MCF 10A (cell line): ENCODE measurements at regions of chr15 and their contacts with region 1.

Region 1: GRCh38 chr15:48084759-48085590 is 35.8 kb upstream of the SLC24A5 start:
- DNase-seq: peak; percentile 49
- H3K4me3 Mint-ChIP-seq: no peak overlapping the region
- H3K27ac Mint-ChIP-seq: no peak overlapping the region
- H3K4me1 Mint-ChIP-seq: peaks cover 12% of the 10 kb centered on the region
- H3K27me3 Mint-ChIP-seq: no peaks in the 10 kb centered on the region
- CTCF ChIP-seq: peak; percentile 47

Region 2: GRCh38 chr15:47473832-47474231 is 611.1 kb before region 1 on chr15:
- CTCF ChIA-PET with region 1: interaction called, 3 read pairs
- POLR2A ChIA-PET with region 1: no interaction called
- intact Hi-C with region 1: loop called (anchors 10 kb)
- DNase-seq: no peak
- H3K4me3 Mint-ChIP-seq: no peak overlapping the region
- H3K27ac Mint-ChIP-seq: no peak overlapping the region
- H3K4me1 Mint-ChIP-seq: peaks cover 6% of the 10 kb centered on the region
- H3K27me3 Mint-ChIP-seq: no peaks in the 10 kb centered on the region
- CTCF ChIP-seq: no peak

Region 3: GRCh38 chr15:48021336-48022086 is 63.5 kb before region 1 on chr15:
- CTCF ChIA-PET with region 1: interaction called, 5 read pairs
- POLR2A ChIA-PET with region 1: interaction called, 3 read pairs
- intact Hi-C with region 1: loop called (anchors 5 kb)
- DNase-seq: no peak
- H3K4me3 Mint-ChIP-seq: no peak overlapping the region
- H3K27ac Mint-ChIP-seq: no peak overlapping the region
- H3K4me1 Mint-ChIP-seq: peaks cover 11% of the 10 kb centered on the region
- H3K27me3 Mint-ChIP-seq: no peaks in the 10 kb centered on the region
- CTCF ChIP-seq: no peak